Psoas muscle (tissue), 8 donors: ENCODE measurements at regions of chr2 and their contacts with region 1.

Region 1: DNA sequence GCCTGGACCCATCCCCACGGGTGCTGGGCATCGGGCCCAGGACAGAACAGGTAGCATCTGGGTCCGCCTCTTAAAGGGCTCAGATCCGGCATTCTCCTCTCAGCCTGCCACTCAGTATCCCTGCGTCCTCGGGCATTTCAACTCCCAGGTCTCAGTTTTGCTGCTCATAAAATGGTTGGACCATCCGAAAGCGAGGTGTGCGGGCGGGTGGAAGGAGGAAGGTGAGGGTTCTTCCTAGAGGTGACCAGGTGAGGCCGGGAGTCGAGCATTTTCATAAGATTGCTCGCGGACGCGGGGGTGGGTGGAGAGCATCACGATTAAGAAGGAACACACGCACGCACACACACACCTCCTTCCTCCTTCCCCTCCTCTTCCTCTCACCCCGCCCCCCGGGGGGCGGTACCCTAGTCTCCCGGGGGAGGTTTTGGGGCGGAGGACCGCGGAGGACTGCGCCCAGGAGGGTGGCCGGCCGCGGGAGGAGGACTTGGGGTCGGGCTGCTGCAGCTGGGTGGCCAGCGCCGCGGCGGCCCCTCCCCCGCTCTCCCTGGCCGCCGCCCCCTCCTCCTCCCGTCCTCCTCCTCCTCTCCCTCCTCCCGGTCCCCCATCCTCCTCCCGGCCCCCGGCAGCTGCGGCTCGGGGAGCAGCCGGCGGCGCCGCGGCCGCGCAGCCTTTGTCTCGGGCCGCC is 97.9 kb upstream of the GPR45 start:
- DNase-seq: peak; percentile 16 to 53
- ATAC-seq: no peak
- H3K4me3 ChIP-seq: peak overlapping the region; percentile 30
- H3K27ac ChIP-seq: no peak overlapping the region
- H3K4me1 ChIP-seq: no peaks in the 10 kb centered on the region
- H3K27me3 ChIP-seq: peaks cover 5 to 61% (median 12%) of the 10 kb centered on the region in 3 donors
- CTCF ChIP-seq: no peak

Region 2: GRCh38 chr2:105102963-105103421 is 40.6 kb before region 1 on chr2:
- intact Hi-C with region 1: no loop called
- DNase-seq: peak in 1 of 2 donors; percentile 33
- ATAC-seq: peak; percentile 79 to 88 (median 84)
- H3K4me3 ChIP-seq: no peak overlapping the region
- H3K27ac ChIP-seq: peak overlapping the region; percentile 78
- H3K4me1 ChIP-seq: peaks cover 16% of the 10 kb centered on the region
- H3K27me3 ChIP-seq: no peaks in the 10 kb centered on the region
- CTCF ChIP-seq: no peak

Region 3: DNA sequence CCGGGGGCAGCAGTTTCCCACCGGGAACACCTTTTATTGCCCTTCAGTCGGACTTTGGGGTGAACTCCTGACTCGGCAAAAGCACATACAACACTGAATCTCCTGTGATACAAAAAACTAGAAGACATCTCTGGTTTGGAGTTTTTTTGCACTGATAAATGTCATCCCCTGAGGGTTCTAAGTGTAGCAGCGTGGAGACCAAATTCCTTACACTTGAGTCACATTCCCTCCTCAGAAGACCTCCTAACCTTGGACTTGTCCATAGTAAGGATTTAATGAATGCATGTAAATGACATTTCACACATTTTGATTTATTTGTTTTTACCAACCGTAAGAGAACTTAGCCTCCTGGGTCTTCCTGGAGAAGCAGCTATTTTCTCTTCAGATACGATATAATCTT is 43.9 kb after region 1 on chr2:
- intact Hi-C with region 1: loop called in 1 of 2 experiments (anchors 5 kb)
- DNase-seq: no peak
- ATAC-seq: no peak
- H3K4me3 ChIP-seq: no peak overlapping the region
- H3K27ac ChIP-seq: no peak overlapping the region
- H3K4me1 ChIP-seq: no peaks in the 10 kb centered on the region
- H3K27me3 ChIP-seq: peaks cover 2 to 11% (median 4%) of the 10 kb centered on the region in 3 donors
- CTCF ChIP-seq: no peak

Region 4: GRCh38 chr2:105315314-105315713 is 171.7 kb after region 1 on chr2:
- intact Hi-C with region 1: no loop called
- DNase-seq: no peak
- ATAC-seq: no peak
- H3K4me3 ChIP-seq: no peak overlapping the region
- H3K27ac ChIP-seq: no peak overlapping the region
- H3K4me1 ChIP-seq: peaks cover 16% of the 10 kb centered on the region
- H3K27me3 ChIP-seq: no peaks in the 10 kb centered on the region
- CTCF ChIP-seq: no peak